ENCODE measurements at regions of chr3 and their contacts with region 1.

Region 1: GRCh38 chr3:184017672-184018423 is at the start of gene ABCC5:
- DNase-seq: peak; percentile 88 to 97 (median 95)
- ATAC-seq: peak; percentile 99
- H3K4me3 ChIP-seq: peak within 1 kb of the TSS; percentile 76 to 96
- H3K27ac ChIP-seq: peak within 1 kb of the TSS; percentile 66 to 71
- H3K4me1 ChIP-seq: peaks cover 9 to 32% of the 10 kb centered on the region in 2 donors
- H3K27me3 ChIP-seq: no peaks in the 10 kb centered on the region
- CTCF ChIP-seq: peak; percentile 44 to 78
- polyA plus RNA-seq, gene ABCC5: 64.0 to 96.4 (median 79.9) TPM

Region 2: GRCh38 chr3:183895296-183895695 is 122.6 kb before region 1 on chr3:
- intact Hi-C with region 1: loop called in 1 of 2 experiments (anchors 5 kb)
- DNase-seq: peak in 2 of 4 donors; percentile 23 to 42
- ATAC-seq: peak; percentile 94
- H3K4me3 ChIP-seq: no peak overlapping the region
- H3K27ac ChIP-seq: no peak overlapping the region
- H3K4me1 ChIP-seq: no peaks in the 10 kb centered on the region
- H3K27me3 ChIP-seq: peaks cover 0 to 19% of the 10 kb centered on the region in 2 donors
- CTCF ChIP-seq: peak; percentile 79 to 89

Measured in left lung (tissue), 14 donors.